Colonic mucosa (tissue), 4 donors: ENCODE measurements at regions of chr2 and their contacts with region 1.

Region 1: DNA sequence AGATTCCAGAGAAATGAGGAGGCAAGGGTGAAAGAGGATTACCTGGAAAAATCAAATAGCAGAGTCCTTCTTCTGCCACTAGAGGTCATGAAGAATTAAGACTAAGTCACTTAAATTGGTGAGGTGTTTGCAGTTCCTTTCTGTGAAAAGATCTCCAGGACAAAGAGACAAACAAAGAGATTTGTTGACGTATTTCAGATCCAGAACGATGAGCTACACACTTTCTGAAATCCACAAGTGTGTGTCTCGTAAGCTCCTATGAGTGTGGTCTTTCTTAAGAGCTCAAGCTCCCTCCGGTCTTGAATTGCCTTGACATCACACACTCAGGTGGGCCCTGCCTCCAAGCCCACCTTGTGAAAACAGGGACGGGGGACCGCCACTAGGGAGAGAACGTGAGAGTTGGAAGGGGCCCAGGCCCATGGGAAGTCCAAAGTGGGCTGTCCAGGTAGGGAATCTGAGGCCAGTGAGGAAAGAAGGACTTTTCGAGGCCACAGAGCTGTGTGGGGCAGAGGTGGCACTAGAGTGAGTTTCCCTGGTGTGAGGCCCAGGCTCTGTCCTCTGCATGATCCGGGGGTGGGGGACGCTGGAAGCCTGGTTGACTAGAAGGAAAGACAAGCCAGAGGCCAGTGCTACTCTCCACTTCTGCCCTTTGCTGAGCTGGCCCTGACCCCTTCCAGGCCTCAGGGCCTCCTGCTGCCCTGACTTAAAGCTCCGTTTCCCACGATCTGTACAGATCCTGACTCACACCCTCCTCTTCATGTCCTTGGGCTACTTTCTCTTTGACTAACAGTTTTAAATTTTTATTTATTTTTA is 168.1 kb upstream of the NCK2 start:
- DNase-seq: no peak
- H3K4me3 ChIP-seq: no peak overlapping the region
- H3K27ac ChIP-seq: no peak overlapping the region
- H3K4me1 ChIP-seq: peaks cover 7% of the 10 kb centered on the region
- H3K27me3 ChIP-seq: no peaks in the 10 kb centered on the region
- CTCF ChIP-seq: peak; percentile 61

Region 2: DNA sequence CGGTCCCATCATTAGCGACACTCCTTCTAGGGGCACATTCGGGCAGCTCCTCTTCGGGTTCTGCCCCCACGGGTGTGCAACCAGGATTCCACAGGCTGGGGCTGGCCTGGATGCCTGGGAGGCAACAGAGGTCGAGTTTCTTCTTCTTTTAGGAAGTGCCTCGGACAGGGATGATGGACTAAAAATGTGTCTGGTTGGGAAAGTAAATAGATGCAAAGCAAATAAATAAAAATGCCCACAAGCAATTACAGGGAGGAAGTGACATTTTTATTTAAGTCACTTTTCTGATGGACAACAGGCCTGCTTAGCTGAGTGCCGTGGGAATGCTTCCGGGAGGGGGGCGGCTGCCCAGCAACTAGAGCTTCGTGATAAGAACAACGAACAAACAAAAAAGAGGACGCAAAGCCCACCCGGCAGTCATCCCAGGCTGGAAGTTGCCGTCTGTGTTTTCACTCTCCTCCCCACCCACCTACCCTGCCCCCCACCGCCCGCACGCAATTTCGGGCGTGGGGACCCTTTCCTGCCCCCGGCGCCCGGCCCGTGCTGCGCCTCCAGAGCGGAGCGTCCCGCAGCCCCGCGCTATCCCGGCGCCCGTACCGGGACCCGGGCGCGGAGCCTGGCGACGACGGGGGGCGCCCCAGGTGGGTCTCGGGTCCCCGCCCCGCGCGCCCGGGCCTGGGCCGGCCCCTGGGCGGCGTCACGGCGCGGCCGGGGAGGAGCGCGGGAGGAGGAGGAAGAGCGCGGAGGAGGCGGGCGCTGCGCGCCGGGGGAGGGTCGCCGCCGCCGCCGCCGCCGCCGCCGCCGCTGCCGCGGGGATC is 167.7 kb after region 1 on chr2:
- intact Hi-C with region 1: loop called (anchors 10 kb)
- DNase-seq: peak; percentile 63
- H3K4me3 ChIP-seq: peak overlapping the region; percentile 59
- H3K27ac ChIP-seq: peak overlapping the region; percentile 74
- H3K4me1 ChIP-seq: no peaks in the 10 kb centered on the region
- H3K27me3 ChIP-seq: no peaks in the 10 kb centered on the region
- CTCF ChIP-seq: no peak

Region 3: DNA sequence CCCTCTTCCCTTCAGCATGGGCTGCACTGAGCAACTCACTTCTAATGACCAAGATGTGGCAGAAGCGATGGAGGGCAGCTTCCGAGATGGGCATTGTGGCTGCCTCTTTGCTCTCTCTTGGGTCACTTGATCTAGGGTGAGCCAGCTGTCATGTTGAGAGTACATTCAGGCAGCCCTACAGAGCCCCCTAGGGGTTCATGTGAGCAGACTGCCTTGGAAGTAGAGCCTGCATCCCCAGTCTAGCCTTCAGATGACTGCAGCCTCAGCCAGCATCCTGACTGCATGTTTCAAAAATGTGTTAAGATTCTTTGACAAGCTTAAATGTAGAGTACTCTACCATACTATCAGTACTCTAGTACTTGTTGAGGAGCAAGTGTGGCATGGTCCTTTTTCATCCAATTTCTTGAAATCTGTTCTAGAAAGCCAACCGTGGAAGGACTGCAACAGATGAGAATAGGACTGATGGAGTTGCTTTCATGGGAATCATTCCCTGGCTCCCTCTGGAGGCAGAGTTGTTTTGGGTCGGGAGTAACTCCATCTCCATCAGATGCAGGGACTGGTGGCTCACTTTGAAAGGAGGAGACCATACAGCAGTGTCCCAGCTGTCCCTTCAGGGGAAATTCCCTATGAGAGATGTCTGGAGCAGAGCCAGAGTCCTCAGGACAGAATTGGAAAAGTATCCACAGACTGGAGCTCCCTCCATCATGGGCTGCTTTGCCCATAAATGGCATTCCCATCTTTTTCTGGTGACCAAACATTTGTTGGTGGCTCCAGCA is 312.2 kb after region 1 on chr2:
- intact Hi-C with region 1: loop called (anchors 5 kb)
- DNase-seq: no peak
- H3K4me3 ChIP-seq: no peak overlapping the region
- H3K27ac ChIP-seq: no peak overlapping the region
- H3K4me1 ChIP-seq: no peaks in the 10 kb centered on the region
- H3K27me3 ChIP-seq: no peaks in the 10 kb centered on the region
- CTCF ChIP-seq: no peak

Region 4: DNA sequence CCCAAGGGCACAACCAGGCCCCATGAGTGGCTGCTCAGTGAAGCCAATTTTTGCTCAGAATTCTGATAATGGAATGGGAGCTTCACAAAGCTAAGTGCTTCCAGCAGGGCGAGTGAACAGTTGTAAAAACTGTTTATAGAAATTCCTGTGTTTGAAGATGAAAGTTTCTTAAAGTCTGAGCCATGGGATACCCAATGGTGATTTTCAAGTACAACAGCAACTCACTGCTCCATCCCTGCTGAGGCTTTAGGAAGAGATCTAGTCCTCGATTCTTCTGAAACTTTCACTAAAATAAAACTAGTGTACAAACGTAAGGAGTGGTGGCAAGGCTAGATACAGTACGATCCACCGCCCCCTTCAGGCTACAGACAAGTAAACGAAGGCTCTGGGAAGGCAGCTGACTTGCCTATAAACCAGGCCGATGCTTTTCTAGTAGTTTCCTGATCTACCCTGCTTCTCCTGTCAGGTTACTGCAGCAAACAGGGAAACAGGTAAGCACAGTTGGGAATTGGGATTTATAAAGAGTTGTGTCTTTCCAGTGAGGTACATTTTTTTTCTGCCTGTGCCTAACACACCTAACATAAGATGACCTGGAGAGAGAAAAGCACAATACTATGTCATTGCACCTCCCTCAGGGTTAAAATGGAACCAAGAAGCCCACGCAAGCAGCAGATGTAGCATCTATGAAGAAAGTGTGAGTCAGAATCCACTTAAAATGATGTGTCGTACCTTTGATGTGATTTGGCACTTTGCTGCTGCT is 508.7 kb after region 1 on chr2:
- intact Hi-C with region 1: loop called (anchors 10 kb)
- DNase-seq: peak; percentile 50
- H3K4me3 ChIP-seq: no peak overlapping the region
- H3K27ac ChIP-seq: no peak overlapping the region
- H3K4me1 ChIP-seq: no peaks in the 10 kb centered on the region
- H3K27me3 ChIP-seq: no peaks in the 10 kb centered on the region
- CTCF ChIP-seq: no peak